ENCODE measurements at regions of chr10 and their contacts with region 1.

Region 1: DNA sequence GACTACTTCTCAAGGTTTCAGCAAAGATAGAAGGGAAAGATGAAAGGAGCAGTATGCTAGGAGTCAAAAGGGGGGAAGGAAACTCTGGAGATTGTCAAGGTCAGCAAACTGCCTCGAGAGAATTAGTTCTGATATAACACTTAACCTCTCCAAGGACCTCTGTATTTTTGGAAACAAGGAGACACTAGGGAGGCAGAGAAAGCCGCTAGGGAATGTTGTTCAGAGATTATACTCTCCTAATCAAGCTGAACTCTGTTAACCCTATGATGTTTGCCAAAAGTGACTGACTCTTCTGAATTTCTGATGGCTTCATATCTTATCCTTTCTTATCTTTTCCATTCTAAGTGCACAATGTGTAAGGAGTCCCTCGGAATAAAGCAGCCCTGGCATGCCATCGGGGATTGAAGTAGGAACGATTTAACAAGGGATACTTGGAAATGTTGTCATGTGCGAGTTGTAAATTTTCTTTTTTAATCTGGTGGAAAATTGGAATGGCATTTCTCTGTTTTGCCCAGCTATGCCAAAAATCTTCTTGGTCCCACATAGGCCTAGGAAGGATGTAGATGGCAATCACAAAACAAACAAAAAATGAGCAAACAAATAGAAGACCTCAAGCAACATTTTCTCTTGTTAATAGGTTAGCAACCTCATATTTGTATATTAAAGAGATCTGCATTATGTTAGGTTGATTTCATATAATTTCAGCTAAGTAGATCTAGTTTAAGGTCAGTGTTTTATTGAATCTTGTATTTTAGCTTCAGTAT is 27.3 kb downstream of the CREM start:
- DNase-seq: no peak
- H3K4me3 Mint-ChIP-seq: no peak overlapping the region
- H3K27ac Mint-ChIP-seq: no peak overlapping the region
- H3K4me1 Mint-ChIP-seq: peaks cover 48% of the 10 kb centered on the region
- H3K27me3 Mint-ChIP-seq: no peaks in the 10 kb centered on the region

Region 2: DNA sequence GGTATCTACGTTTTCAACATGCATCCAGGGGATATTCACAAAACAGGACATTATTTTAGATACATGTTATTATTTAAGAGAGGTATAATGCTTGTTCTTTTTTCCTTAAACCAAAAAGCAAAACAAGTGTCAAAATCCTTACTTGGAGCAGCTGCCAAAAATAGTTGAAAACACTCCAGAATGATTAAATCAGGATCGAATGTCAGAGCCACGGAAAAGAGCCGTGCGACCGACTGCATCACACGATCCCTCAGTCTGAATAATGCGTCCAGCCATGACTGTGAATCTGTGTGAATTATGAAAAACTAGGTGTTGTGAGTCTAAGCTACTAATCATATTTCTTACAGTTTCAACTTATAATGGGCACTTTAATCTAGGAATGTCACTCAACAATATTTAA is 464.8 kb before region 1 on chr10:
- CTCF ChIA-PET with region 1: no interaction called
- POLR2A ChIA-PET with region 1: no interaction called
- intact Hi-C with region 1: no loop called
- DNase-seq: no peak
- H3K4me3 Mint-ChIP-seq: no peak overlapping the region
- H3K27ac Mint-ChIP-seq: no peak overlapping the region
- H3K4me1 Mint-ChIP-seq: no peaks in the 10 kb centered on the region
- H3K27me3 Mint-ChIP-seq: peaks cover 2% of the 10 kb centered on the region

Region 3: GRCh38 chr10:35133586-35133985 is 20.3 kb before region 1 on chr10:
- CTCF ChIA-PET with region 1: interaction called, 27 read pairs
- POLR2A ChIA-PET with region 1: interaction called, 33 read pairs
- intact Hi-C with region 1: loop called (anchors 1 kb)
- DNase-seq: peak; percentile 27
- H3K4me3 Mint-ChIP-seq: peak overlapping the region; percentile 37
- H3K27ac Mint-ChIP-seq: peak overlapping the region; percentile 74
- H3K4me1 Mint-ChIP-seq: peaks cover 59% of the 10 kb centered on the region
- H3K27me3 Mint-ChIP-seq: no peaks in the 10 kb centered on the region

Region 4: GRCh38 chr10:35208536-35208935 is 54.6 kb after region 1 on chr10:
- CTCF ChIA-PET with region 1: no interaction called
- POLR2A ChIA-PET with region 1: no interaction called
- intact Hi-C with region 1: loop called (anchors 1 kb)
- DNase-seq: peak; percentile 79
- H3K4me3 Mint-ChIP-seq: peak overlapping the region; percentile 33
- H3K27ac Mint-ChIP-seq: peak overlapping the region; percentile 80
- H3K4me1 Mint-ChIP-seq: peaks cover 24% of the 10 kb centered on the region
- H3K27me3 Mint-ChIP-seq: no peaks in the 10 kb centered on the region

Region 5: GRCh38 chr10:35218339-35218955 is 64.5 kb after region 1 on chr10:
- CTCF ChIA-PET with region 1: interaction called, 9 read pairs
- POLR2A ChIA-PET with region 1: no interaction called
- intact Hi-C with region 1: loop called (anchors 1 kb)
- DNase-seq: peak; percentile 90
- H3K4me3 Mint-ChIP-seq: peak overlapping the region; percentile 43
- H3K27ac Mint-ChIP-seq: peak overlapping the region; percentile 81
- H3K4me1 Mint-ChIP-seq: peaks cover 48% of the 10 kb centered on the region
- H3K27me3 Mint-ChIP-seq: no peaks in the 10 kb centered on the region

Region 6: GRCh38 chr10:35372329-35372728 is 218.4 kb after region 1 on chr10:
- CTCF ChIA-PET with region 1: no interaction called
- POLR2A ChIA-PET with region 1: no interaction called
- intact Hi-C with region 1: no loop called
- DNase-seq: no peak
- H3K4me3 Mint-ChIP-seq: no peak overlapping the region
- H3K27ac Mint-ChIP-seq: no peak overlapping the region
- H3K4me1 Mint-ChIP-seq: peaks cover 76% of the 10 kb centered on the region
- H3K27me3 Mint-ChIP-seq: no peaks in the 10 kb centered on the region